Activated CD4-positive, alpha-beta T cell treated with anti-CD3 and anti-CD28 coated beads, Interleukin-2, amount 10 ng/mL, durations not matched to agents 7 days and 5 days (primary cell): ENCODE measurements at regions of chr3 and their contacts with region 1.

Region 1: GRCh38 chr3:16290007-16290826 is 25.2 kb downstream of the OXNAD1 start:
- DNase-seq: peak; percentile 75
- H3K4me3 Mint-ChIP-seq: peak overlapping the region; percentile 87
- H3K27ac Mint-ChIP-seq: peak overlapping the region; percentile 96
- H3K4me1 Mint-ChIP-seq: peaks cover 63% of the 10 kb centered on the region
- H3K27me3 Mint-ChIP-seq: no peaks in the 10 kb centered on the region

Region 2: GRCh38 chr3:16300881-16301359 is 10.7 kb after region 1 on chr3:
- CTCF ChIA-PET with region 1: interaction called, 60 read pairs
- POLR2A ChIA-PET with region 1: interaction called, 4 read pairs
- DNase-seq: peak; percentile 79
- H3K4me3 Mint-ChIP-seq: peak overlapping the region; percentile 81
- H3K27ac Mint-ChIP-seq: peak overlapping the region; percentile 92
- H3K4me1 Mint-ChIP-seq: peaks cover 94% of the 10 kb centered on the region
- H3K27me3 Mint-ChIP-seq: no peaks in the 10 kb centered on the region

Region 3: GRCh38 chr3:16311960-16312451 is 21.8 kb after region 1 on chr3:
- CTCF ChIA-PET with region 1: interaction called, 17 read pairs
- POLR2A ChIA-PET with region 1: interaction called, 3 read pairs
- DNase-seq: peak; percentile 77
- H3K4me3 Mint-ChIP-seq: peak overlapping the region; percentile 60
- H3K27ac Mint-ChIP-seq: peak overlapping the region; percentile 93
- H3K4me1 Mint-ChIP-seq: peaks cover 90% of the 10 kb centered on the region
- H3K27me3 Mint-ChIP-seq: no peaks in the 10 kb centered on the region

Region 4: GRCh38 chr3:16319307-16319706 is 29.1 kb after region 1 on chr3:
- CTCF ChIA-PET with region 1: interaction called, 56 read pairs
- POLR2A ChIA-PET with region 1: interaction called, 3 read pairs
- DNase-seq: peak; percentile 91
- H3K4me3 Mint-ChIP-seq: no peak overlapping the region
- H3K27ac Mint-ChIP-seq: peak overlapping the region; percentile 83
- H3K4me1 Mint-ChIP-seq: peaks cover 72% of the 10 kb centered on the region
- H3K27me3 Mint-ChIP-seq: no peaks in the 10 kb centered on the region

Region 5: DNA sequence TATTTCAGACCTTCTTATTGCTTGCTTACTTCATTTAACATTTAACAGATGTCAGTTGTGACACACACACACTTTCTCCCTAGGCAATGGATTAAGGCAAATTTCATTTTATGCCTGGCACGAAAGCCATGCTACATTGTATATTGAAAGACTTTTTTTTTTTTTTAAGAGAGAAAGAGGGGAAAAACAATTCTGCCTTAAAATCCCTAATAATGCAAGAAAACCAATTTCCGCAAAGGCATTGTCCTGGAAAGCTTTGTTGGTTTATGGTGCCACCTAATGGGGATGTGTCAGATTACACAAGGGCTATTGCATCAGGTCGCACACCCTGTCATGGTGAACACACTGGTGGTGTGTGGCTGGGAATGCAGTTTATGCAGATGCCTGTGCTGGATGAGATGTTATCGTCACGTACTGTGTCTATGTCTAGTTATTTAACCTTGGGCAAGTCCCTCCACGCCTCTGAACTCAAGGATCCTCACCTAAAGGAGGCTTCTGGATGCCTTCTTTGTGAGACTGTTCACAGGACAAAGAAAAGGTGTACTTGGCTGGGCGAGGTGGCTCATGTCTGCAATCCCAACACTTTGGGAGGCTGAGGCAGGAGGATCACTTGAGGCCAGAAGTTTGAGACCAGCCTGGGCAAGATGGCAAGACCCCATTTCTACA is 260.6 kb after region 1 on chr3:
- CTCF ChIA-PET with region 1: interaction called, 14 read pairs
- POLR2A ChIA-PET with region 1: no interaction called
- DNase-seq: peak; percentile 87
- H3K4me3 Mint-ChIP-seq: no peak overlapping the region
- H3K27ac Mint-ChIP-seq: peak overlapping the region; percentile 66
- H3K4me1 Mint-ChIP-seq: peaks cover 11% of the 10 kb centered on the region
- H3K27me3 Mint-ChIP-seq: peaks cover 10% of the 10 kb centered on the region